HEK293 (cell line): ENCODE measurements at regions of chr1 and their contacts with region 1.

Region 1: GRCh38 chr1:64242895-64243756 is 39.7 kb downstream of the UBE2U start:
- H3K4me3 ChIP-seq: no peak overlapping the region
- H3K27ac ChIP-seq: no peak overlapping the region
- H3K4me1 ChIP-seq: peaks cover 10% of the 10 kb centered on the region
- CTCF ChIP-seq: no peak

Region 2: GRCh38 chr1:63575340-63575826 is 667.7 kb before region 1 on chr1:
- CTCF ChIA-PET with region 1: interaction called, 16 read pairs
- POLR2A ChIA-PET with region 1: no interaction called
- H3K4me3 ChIP-seq: no peak overlapping the region
- H3K27ac ChIP-seq: no peak overlapping the region
- H3K4me1 ChIP-seq: no peaks in the 10 kb centered on the region
- CTCF ChIP-seq: no peak

Region 3: DNA sequence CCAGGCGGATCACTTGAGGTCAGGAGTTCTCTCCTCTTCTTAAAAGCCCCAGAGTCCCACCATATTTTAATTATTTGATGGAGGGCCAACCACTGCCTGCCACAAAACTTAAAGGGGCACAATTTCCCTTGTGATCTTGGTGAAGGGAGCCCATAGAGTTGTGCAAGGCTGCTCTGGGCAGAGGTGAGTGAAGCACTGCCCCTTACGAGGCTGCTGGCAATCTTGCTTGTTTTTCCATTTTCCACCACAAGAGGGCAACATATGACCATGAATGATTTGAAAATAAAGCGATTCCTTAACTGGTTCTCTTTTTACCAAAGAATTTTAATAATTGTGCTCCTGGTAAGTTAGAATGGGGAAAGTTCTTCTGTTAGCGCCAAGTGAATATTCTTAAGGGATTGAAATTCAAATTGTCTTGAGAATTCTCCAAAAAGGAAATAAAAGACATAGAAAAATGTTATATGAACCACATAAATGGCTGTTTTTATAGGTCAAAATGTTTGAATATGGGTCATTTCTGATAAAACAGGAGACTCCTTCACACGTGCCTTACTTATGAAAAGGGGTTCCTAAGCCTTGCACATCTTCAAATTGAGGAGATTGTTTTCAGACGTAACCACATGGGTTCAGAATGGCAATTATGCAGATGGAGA is 627.2 kb before region 1 on chr1:
- CTCF ChIA-PET with region 1: interaction called, 25 read pairs
- POLR2A ChIA-PET with region 1: no interaction called
- H3K4me3 ChIP-seq: no peak overlapping the region
- H3K27ac ChIP-seq: no peak overlapping the region
- H3K4me1 ChIP-seq: peaks cover 3% of the 10 kb centered on the region; the same call in 1 of the 2 replicates
- CTCF ChIP-seq: peak; percentile 36; the same call in 1 of the 2 replicates

Region 4: DNA sequence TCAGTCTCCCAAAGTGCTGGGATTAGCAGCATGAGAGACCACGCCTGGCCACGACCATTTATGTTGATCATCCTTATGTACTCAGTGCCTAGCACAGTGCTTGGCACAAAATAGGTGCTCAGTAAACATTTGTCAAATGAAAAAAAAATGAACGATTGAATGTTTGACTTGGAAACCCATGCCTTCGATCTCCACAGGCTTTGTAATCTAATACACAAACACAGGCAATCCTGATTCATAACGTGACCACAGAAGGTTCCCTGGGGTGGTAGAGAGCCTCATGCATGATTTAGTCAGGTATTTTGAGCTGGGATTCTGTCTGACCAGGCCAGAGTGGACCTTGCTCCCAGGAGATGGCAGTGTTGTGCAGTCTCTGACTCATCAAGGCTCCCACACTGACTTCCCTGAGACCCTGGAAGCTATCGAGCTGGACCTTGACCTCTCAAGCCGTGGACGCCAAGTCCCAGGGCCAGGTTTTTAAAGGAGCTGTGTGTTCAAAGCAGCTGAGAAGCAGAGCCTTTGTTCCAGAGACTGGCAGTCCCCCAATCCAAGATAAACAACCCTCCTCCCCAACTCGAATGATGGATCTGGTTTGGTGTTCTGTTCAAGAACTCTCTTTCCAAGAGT is 568.8 kb before region 1 on chr1:
- CTCF ChIA-PET with region 1: interaction called, 44 read pairs
- POLR2A ChIA-PET with region 1: no interaction called
- H3K4me3 ChIP-seq: no peak overlapping the region
- H3K27ac ChIP-seq: no peak overlapping the region
- H3K4me1 ChIP-seq: no peaks in the 10 kb centered on the region; the same call in 1 of the 2 replicates
- CTCF ChIP-seq: peak; percentile 55; the same call in 1 of the 2 replicates